GM12878 (cell line): ENCODE measurements at regions of chr2 and their contacts with region 1.

Region 1: GRCh38 chr2:105369747-105370690 is 28.8 kb downstream of the FHL2 start:
- DNase-seq: peak; percentile 55
- ATAC-seq: peak; percentile 91
- H3K4me3 ChIP-seq: no peak overlapping the region
- H3K27ac ChIP-seq: no peak overlapping the region
- H3K4me1 ChIP-seq: peaks cover 13% of the 10 kb centered on the region
- H3K27me3 ChIP-seq: no peaks in the 10 kb centered on the region
- CTCF ChIP-seq: peak; percentile 95 to 96 (median 96)
- EP300 ChIP-seq: no peak
- POLR2A ChIP-seq: no peak
- RAD21 ChIP-seq: peak; percentile 90

Region 2: GRCh38 chr2:105521205-105521604 is 151.2 kb after region 1 on chr2:
- CTCF ChIA-PET with region 1: interaction called, 95 read pairs
- POLR2A ChIA-PET with region 1: interaction called, 3 read pairs
- RAD21 ChIA-PET with region 1: interaction called, 9 read pairs
- SMC1A ChIA-PET with region 1: interaction called, 27 read pairs
- in situ Hi-C with region 1: loop called (anchors 5 kb)
- intact Hi-C with region 1: loop called (anchors 1 kb)
- DNase-seq: no peak
- ATAC-seq: no peak
- H3K4me3 ChIP-seq: no peak overlapping the region
- H3K27ac ChIP-seq: no peak overlapping the region
- H3K4me1 ChIP-seq: no peaks in the 10 kb centered on the region
- H3K27me3 ChIP-seq: no peaks in the 10 kb centered on the region
- CTCF ChIP-seq: peak in 2 of 3 experiments; percentile 31 to 39; a peak in 3 of 6 replicates
- EP300 ChIP-seq: no peak
- POLR2A ChIP-seq: no peak
- RAD21 ChIP-seq: peak; percentile 45; the same call in 1 of the 2 replicates

Region 3: DNA sequence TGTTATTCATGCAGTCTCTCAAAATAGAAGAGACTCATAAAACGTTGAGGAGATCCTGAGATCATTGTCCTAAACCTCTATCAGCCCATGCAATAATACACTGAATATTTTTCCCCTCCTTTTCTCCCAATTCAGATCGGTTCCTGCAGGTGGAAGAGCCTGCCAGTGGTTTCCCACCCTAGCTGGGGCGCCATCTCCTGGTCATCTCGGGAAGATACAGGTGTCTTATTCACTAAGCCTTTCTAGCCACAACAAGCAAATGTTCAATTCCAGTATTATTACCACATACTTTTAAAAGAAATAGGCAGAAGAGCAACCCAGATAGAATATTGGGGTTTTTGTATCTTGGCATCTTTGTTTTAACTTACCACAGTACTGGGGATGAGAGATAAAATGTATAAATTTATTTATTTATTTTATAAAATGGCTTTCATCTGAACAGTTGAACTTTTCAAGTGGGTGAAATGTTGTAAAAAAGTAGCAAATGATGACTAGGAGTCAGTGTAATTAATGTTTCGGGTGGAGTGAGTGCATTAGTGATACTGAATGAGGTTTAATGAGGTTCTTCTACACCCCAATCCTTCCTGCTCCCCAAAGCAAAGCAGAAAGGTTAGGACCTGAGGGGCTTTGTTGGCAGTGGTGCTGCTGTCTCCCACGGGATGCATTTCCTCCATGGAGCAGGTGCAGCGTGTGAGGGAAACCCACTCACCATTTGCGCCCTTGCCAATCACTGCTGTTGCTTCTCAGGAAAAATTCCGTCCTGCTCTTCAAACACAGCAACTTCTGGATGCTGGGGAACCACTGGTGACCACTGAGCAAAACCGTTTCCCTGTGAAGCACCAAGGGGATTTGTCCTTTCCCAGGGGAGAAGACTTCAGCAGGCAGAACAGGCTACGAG is 176.0 kb after region 1 on chr2:
- CTCF ChIA-PET with region 1: interaction called, 26 read pairs
- POLR2A ChIA-PET with region 1: no interaction called
- RAD21 ChIA-PET with region 1: interaction called, 7 read pairs
- SMC1A ChIA-PET with region 1: interaction called, 6 read pairs
- in situ Hi-C with region 1: no loop called
- intact Hi-C with region 1: loop called (anchors 1 kb)
- DNase-seq: no peak
- ATAC-seq: peak; percentile 85
- H3K4me3 ChIP-seq: no peak overlapping the region
- H3K27ac ChIP-seq: no peak overlapping the region
- H3K4me1 ChIP-seq: no peaks in the 10 kb centered on the region
- H3K27me3 ChIP-seq: peaks cover 2 to 3% of the 10 kb centered on the region in 2 experiments; a peak in 2 of 4 replicates
- CTCF ChIP-seq: peak; percentile 69 to 71 (median 70)
- EP300 ChIP-seq: no peak
- POLR2A ChIP-seq: no peak
- RAD21 ChIP-seq: peak; percentile 54